ENCODE measurements at regions of chr6 and their contacts with region 1.

Region 1: GRCh38 chr6:80133020-80133419 is 26.5 kb downstream of the BCKDHB start:
- DNase-seq: peak; percentile 45 to 72 (median 66)
- H3K4me3 ChIP-seq: no peak overlapping the region
- H3K27ac ChIP-seq: no peak overlapping the region
- H3K4me1 ChIP-seq: no peaks in the 10 kb centered on the region
- H3K27me3 ChIP-seq: no peaks in the 10 kb centered on the region

Region 2: DNA sequence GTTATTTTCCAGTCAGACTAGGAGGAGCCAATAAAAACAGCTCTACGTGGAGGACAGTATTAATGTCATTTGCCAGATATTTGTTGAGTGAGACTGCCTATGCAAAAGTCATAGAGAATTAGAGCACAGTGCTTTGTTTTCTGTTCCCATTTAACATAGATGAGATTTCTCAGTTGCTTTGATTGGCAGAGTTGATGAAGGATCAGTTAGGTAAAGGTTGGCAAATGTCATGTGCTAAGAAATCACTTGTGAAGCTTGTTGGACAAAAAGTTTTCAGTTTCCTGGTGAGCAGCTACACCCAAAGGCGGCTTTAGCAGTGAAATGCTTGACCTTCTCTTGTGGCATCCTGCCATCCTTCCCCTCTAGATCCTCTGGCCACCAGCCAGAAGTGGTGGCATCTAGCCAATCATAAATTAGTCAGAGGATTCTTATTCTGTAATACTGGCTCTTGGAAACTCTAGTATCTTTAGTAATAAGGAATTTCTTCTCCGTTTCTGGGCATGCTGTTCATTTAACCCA is 10.5 kb after region 1 on chr6:
- CTCF ChIA-PET with region 1: interaction called, 13 read pairs
- POLR2A ChIA-PET with region 1: no interaction called
- DNase-seq: peak in 2 of 3 donors; percentile 2 to 3
- H3K4me3 ChIP-seq: no peak overlapping the region
- H3K27ac ChIP-seq: no peak overlapping the region
- H3K4me1 ChIP-seq: no peaks in the 10 kb centered on the region
- H3K27me3 ChIP-seq: no peaks in the 10 kb centered on the region